IMR-90 (cell line): ENCODE measurements at regions of chr3 and their contacts with region 1.

Region 1: GRCh38 chr3:144097139-144097538 is 125.5 kb downstream of the DIPK2A start:
- DNase-seq: no peak
- ATAC-seq: no peak
- H3K4me3 ChIP-seq: no peak overlapping the region
- H3K27ac ChIP-seq: no peak overlapping the region
- H3K4me1 ChIP-seq: no peaks in the 10 kb centered on the region
- H3K27me3 ChIP-seq: no peaks in the 10 kb centered on the region
- CTCF ChIP-seq: no peak
- POLR2A ChIP-seq: no peak
- RAD21 ChIP-seq: no peak

Region 2: DNA sequence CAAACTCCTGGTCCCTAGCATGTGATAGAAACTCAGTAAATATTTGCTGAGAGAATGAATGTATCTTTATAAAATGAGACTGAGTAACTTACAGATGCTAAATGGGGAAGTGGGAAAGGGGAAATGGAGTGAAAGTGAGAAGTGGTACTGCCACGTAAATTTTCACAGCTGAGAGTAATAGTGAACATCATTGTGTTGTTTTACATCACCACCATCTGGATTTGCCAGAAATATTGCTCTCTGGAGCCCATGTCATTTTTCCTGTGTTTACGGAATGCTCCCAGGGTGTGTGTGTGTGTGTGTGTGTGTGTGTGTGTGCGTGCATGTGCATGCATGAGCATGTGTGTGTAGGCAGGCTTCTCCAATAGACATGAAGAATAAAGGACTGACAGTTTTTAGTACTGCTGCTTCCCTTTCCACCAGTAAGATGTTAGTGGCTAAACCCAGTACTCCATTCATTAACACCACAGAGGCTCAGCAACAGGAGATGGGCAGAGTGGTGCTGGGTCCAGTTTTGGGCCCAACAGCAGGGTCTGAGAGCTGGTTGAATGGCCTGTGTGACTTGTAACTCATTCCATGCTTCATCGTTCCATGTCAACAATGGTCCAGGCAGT is 68.2 kb before region 1 on chr3:
- CTCF ChIA-PET with region 1: no interaction called
- POLR2A ChIA-PET with region 1: no interaction called
- dilution Hi-C with region 1: no loop called
- in situ Hi-C with region 1: no loop called
- intact Hi-C with region 1: loop called (anchors 10 kb)
- DNase-seq: no peak
- ATAC-seq: no peak
- H3K4me3 ChIP-seq: no peak overlapping the region
- H3K27ac ChIP-seq: no peak overlapping the region
- H3K4me1 ChIP-seq: no peaks in the 10 kb centered on the region
- H3K27me3 ChIP-seq: no peaks in the 10 kb centered on the region
- CTCF ChIP-seq: no peak
- POLR2A ChIP-seq: no peak
- RAD21 ChIP-seq: no peak